ENCODE measurements at regions of chr20 and their contacts with region 1.

Region 1: GRCh38 chr20:25247956-25248785 is at the start of gene PYGB:
- DNase-seq: peak; percentile 87
- ATAC-seq: peak; percentile 88
- H3K4me3 Mint-ChIP-seq: peak within 1 kb of the TSS; percentile 88
- H3K27ac Mint-ChIP-seq: peak within 1 kb of the TSS; percentile 88
- H3K4me1 Mint-ChIP-seq: peaks cover 56% of the 10 kb centered on the region
- H3K27me3 Mint-ChIP-seq: peaks cover 3% of the 10 kb centered on the region
- total RNA-seq, gene PYGB: 18.0 to 21.1 TPM

Region 2: GRCh38 chr20:23357767-23358591 is 1890.2 kb before region 1 on chr20:
- CTCF ChIA-PET with region 1: no interaction called
- POLR2A ChIA-PET with region 1: no interaction called
- intact Hi-C with region 1: loop called in 1 of 2 experiments (anchors 5 kb)
- DNase-seq: peak; percentile 100
- ATAC-seq: peak; percentile 84
- H3K4me3 Mint-ChIP-seq: peak overlapping the region; percentile 88
- H3K27ac Mint-ChIP-seq: peak overlapping the region; percentile 93
- H3K4me1 Mint-ChIP-seq: peaks cover 15% of the 10 kb centered on the region
- H3K27me3 Mint-ChIP-seq: no peaks in the 10 kb centered on the region

Region 3: DNA sequence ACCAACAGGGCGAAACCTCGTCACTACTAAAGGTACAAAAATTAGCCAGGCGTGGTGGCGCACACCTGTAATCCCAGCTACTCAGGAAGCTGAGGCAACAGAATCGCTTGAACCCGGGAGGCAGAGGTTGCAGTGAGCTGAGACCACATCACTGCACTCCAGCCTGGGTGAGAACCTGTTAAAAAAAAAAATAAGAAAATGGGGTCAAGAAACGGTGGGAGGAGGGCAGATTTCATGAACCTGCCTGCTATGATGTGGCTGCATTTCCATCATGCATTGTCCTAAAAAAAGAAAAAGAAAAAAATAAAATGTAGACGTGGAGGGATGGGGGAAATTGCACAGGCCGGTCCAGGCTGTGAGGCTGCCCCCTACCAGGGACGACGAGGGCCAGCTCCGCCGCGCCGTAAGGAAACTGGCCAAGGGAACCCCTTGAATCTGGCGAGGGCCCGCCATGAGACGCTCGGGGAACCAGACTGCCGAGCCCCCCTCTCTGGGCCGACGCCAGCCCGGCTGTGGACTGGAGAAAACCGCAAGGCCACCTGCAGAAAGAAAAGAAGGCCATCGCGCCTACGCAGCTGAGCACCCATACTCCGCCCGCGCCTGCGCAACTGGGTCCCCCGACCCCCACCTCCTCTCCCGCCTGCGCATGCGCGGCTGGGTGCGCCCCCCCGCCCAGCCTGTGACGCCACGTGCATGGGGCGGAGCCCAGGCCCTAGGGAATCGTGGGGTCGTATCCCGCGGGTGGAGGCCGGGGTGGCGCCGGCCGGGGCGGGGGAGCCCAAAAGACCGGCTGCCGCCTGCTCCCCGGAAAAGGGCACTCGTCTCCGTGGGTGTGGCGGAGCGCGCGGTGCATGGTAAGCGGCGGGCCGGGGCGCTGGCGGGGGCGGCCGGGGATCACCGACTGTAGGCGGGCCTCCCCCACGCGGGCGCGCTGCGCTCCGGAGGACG is 52.9 kb before region 1 on chr20 and contains the start of gene ENTPD6:
- CTCF ChIA-PET with region 1: no interaction called
- POLR2A ChIA-PET with region 1: no interaction called
- intact Hi-C with region 1: loop called (anchors 1 to 2 kb)
- DNase-seq: peak; percentile 94
- ATAC-seq: peak; percentile 86
- H3K4me3 Mint-ChIP-seq: peak within 1 kb of the TSS; percentile 84
- H3K27ac Mint-ChIP-seq: peak within 1 kb of the TSS; percentile 85
- H3K4me1 Mint-ChIP-seq: peaks cover 39% of the 10 kb centered on the region
- H3K27me3 Mint-ChIP-seq: no peaks in the 10 kb centered on the region
- total RNA-seq, gene ENTPD6: 34.3 to 41.5 TPM

Region 4: DNA sequence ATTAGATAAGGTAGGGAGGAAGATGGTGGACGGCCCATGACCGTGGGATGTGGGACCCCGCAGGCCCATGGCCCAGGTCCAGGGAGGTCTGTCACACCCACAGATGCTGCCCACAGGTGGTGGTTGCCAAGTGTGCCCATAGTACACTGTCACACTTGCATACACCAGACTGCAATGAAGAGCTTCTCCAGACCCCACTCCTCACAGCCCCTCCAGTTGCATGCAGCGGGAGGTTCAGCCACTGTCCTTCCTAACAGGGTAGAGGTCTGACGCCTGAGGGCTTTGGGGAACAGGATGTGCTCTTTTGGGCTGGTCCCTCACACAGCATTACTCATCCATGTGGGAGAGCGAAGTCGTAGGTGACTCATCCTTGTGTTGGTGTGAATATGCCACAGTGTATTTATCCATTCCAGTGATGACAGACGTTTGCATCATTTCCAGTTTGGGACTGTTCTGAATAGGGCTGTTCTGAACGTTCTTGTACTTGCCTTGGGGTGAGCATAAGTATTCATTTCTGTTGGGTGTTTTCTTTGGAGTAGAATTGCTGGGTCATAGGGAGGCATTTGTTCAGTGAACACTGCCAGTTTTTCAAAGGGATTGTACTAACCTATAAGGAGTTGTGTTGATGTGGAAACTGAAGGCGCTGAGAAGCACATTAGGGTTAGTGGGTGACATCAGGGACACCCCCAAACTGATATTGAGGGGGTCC is 10.4 kb before region 1 on chr20:
- CTCF ChIA-PET with region 1: no interaction called
- POLR2A ChIA-PET with region 1: no interaction called
- intact Hi-C with region 1: loop called (anchors 1 kb)
- DNase-seq: peak; percentile 82
- ATAC-seq: peak; percentile 97
- H3K4me3 Mint-ChIP-seq: peak overlapping the region; percentile 56
- H3K27ac Mint-ChIP-seq: peak overlapping the region; percentile 96
- H3K4me1 Mint-ChIP-seq: peaks cover 30% of the 10 kb centered on the region
- H3K27me3 Mint-ChIP-seq: peaks cover 12% of the 10 kb centered on the region

Region 5: DNA sequence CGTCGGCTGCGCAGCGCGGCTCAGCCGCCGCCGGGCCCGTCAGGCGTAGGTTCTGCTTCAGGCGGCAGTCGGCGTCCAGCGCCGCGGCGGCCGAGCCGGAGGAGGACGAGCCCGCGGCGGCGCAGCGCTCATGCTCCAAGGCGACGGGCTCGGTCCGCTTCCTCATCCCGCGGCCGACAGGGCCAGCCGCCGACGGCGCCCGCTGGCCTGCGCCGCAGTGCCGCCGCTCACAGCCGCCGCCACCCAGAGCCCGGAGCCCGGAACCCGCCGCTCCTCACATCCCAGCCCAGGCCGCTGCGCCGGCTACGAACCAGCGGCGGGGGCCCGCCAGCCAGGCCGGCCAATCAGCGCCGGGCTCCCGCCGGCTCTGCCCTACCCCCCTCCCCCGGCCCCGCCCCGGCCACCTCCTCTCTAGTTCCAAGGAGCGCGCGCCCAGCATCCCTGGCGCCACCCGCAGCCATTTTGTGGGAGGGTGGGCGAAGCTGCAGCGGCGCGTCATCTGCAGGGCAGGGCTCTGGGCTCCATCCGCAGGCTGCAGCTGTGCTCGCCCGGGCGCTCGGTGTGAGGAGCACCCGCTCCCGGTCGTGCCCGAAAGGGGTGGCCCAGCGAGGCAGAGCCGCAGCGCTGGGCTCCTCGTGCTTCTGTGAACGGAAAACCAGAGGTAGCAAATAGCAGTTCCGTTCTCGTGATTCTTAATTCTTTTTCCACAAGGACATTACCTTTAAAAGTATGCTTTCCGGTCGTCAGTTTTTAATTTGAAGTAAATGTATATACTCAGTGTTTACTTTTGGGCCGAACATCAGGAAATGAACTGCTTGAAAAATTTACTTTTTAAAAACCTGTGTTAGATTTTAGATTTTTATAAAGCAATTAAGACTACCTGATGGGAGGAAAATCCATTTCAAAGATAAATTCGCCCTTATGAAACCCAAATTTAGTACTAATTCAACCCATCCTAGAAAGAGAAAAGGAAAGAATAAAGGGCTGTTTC is 142.7 kb after region 1 on chr20 and contains the start of gene ABHD12:
- CTCF ChIA-PET with region 1: no interaction called
- POLR2A ChIA-PET with region 1: no interaction called
- intact Hi-C with region 1: loop called (anchors 1 to 5 kb)
- DNase-seq: peak; percentile 98
- ATAC-seq: peak; percentile 97
- H3K4me3 Mint-ChIP-seq: peak within 1 kb of the TSS; percentile 79
- H3K27ac Mint-ChIP-seq: peak within 1 kb of the TSS; percentile 84
- H3K4me1 Mint-ChIP-seq: peaks cover 12% of the 10 kb centered on the region
- H3K27me3 Mint-ChIP-seq: no peaks in the 10 kb centered on the region
- total RNA-seq, gene ABHD12: 17.4 to 18.7 TPM

Region 6: DNA sequence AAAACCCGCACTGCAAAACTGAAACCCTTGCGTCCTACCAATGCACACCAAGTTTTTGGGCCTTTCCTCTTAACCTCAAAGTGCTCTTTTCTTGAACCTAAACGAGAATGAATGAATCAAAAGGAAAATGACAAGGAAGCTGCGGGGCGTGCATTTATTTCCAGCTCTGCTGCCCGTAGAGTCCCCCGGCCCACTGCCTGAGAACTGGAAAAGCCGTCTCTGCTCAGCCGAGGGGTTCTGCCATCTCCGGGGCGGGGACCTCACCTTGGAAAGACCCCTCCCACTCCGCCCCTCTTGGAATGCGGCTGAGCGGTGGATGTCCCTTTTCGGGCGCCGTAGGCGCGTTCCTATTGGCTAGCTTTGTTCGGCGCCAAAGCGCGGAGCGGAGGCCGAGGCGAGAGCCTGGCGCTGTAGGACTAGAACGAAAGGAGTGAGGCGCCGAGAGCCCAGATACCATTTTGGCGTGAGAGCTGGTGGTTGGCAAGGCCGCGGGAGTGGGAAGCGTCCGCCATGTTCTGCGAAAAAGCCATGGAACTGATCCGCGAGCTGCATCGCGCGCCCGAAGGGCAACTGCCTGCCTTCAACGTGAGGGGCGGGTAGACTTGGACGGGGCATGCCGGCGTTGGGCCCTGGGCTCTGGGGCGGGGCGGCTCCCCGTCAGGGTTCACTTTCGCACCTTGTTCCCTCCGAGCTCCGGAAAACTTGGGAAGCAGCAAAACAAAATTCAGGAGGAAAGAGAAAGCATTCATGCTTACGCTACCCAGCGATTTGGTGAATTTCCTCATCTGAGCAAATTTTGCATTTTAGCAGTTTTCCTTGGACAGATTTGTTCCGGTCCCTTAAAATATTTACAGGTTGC is 159.4 kb after region 1 on chr20 and contains the start of gene GINS1:
- CTCF ChIA-PET with region 1: interaction called, 4 read pairs
- POLR2A ChIA-PET with region 1: no interaction called
- intact Hi-C with region 1: loop called in 1 of 2 experiments (anchors 1 kb)
- DNase-seq: peak; percentile 92
- ATAC-seq: peak; percentile 92
- H3K4me3 Mint-ChIP-seq: peak within 1 kb of the TSS; percentile 78
- H3K27ac Mint-ChIP-seq: peak within 1 kb of the TSS; percentile 94
- H3K4me1 Mint-ChIP-seq: peaks cover 16% of the 10 kb centered on the region
- H3K27me3 Mint-ChIP-seq: no peaks in the 10 kb centered on the region
- total RNA-seq, gene GINS1: 24.6 to 32.7 TPM

Region 7: DNA sequence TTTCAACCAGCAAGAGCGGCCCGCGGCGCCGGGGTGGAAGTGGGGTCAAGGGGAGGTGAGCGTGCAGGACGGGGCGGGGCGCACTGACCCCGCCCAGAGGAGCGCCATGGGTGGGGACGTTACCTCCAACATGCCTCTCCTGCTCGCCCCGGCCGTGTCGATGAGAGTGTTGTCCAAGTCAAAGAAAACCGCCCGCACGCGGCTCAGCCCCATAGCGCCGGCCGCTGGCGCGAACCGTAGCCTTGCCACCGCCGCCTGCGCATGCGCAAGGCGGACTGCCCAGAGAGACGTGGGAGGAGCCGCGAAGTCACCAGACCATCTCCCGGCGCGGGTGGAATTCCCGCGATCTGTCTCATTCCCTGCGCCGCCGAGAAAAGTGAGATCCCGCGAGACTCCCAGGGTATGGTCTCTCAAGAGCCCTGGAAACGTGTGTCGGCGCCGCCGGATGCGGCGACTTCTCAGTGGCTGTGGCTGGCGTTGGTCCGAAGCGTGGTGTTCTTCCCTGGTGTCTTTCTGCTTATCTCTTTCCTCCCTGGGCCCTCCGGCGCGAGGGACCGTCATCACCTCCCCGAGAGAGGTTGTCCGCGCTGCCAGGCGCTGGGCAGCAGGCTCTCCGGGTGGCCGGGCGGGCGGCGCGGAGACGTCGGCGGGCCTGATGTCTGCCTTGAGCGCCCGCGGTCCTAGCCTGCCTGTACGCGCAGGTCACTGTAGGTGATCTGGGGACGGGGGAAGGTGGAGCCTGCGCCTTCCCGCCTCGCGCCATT is 375.7 kb after region 1 on chr20 and contains the start of gene NANP:
- CTCF ChIA-PET with region 1: no interaction called
- POLR2A ChIA-PET with region 1: no interaction called
- intact Hi-C with region 1: loop called in 1 of 2 experiments (anchors 1 kb)
- DNase-seq: peak; percentile 95
- ATAC-seq: peak; percentile 87
- H3K4me3 Mint-ChIP-seq: peak within 1 kb of the TSS; percentile 80
- H3K27ac Mint-ChIP-seq: peak within 1 kb of the TSS; percentile 95
- H3K4me1 Mint-ChIP-seq: peaks cover 21% of the 10 kb centered on the region
- H3K27me3 Mint-ChIP-seq: no peaks in the 10 kb centered on the region
- total RNA-seq, gene NANP: 6.1 to 8.3 TPM